ENCODE measurements at regions of chr7 and their contacts with region 1.

Region 1: DNA sequence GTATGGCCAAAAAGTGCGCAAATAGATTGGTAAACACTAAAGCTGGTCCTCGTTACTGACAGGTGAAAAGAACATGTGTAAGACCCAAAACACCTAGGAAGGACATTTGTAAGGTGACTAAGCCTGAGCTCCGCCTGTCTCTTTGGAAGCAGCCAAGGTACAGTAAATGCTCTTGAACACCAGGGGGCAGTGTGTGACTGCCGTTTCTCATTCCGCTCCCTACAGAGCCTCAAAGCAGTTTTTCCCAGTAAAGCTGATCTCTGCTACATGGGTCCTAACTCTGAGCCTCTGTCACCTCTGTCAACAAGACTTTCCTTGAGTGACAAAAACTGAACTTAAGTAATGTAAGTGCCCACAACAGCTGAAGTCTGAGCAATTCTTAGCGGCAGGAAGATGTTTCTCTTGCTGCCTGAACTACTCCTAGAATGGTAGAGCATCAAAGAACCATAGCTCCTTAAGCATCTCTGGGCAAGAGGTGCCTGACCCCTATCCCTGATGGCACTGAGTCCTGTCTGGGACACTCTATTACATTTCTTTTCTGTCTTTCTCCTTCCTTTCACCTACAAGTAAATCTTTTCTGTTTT is 238.0 kb upstream of the INHBA start:
- DNase-seq: peak; percentile 59 to 71
- ATAC-seq: peak; percentile 79 to 90
- H3K4me3 ChIP-seq: no peak overlapping the region
- H3K27ac ChIP-seq: no peak overlapping the region
- H3K4me1 ChIP-seq: 0 out of 3 replicates have a peak, but pooled peaks cover 5% of the 10 kb centered on the region
- CTCF ChIP-seq: peak; percentile 77
- EP300 ChIP-seq: no peak
- POLR2A ChIP-seq: no peak
- RAD21 ChIP-seq: peak; percentile 70 to 74

Region 2: GRCh38 chr7:41425926-41426325 is 514.9 kb before region 1 on chr7:
- CTCF ChIA-PET with region 1: no interaction called
- POLR2A ChIA-PET with region 1: no interaction called
- DNase-seq: no peak
- ATAC-seq: no peak; a peak in 1 of 6 replicates
- H3K4me3 ChIP-seq: no peak overlapping the region
- H3K27ac ChIP-seq: no peak overlapping the region
- H3K4me1 ChIP-seq: no peaks in the 10 kb centered on the region
- CTCF ChIP-seq: no peak
- EP300 ChIP-seq: no peak
- POLR2A ChIP-seq: no peak
- RAD21 ChIP-seq: no peak

Region 3: GRCh38 chr7:41612798-41613197 is 328.1 kb before region 1 on chr7:
- CTCF ChIA-PET with region 1: no interaction called
- POLR2A ChIA-PET with region 1: no interaction called
- DNase-seq: no peak
- ATAC-seq: no peak
- H3K4me3 ChIP-seq: no peak overlapping the region
- H3K27ac ChIP-seq: no peak overlapping the region
- H3K4me1 ChIP-seq: no peaks in the 10 kb centered on the region
- CTCF ChIP-seq: no peak
- EP300 ChIP-seq: no peak
- POLR2A ChIP-seq: no peak
- RAD21 ChIP-seq: no peak

Region 4: DNA sequence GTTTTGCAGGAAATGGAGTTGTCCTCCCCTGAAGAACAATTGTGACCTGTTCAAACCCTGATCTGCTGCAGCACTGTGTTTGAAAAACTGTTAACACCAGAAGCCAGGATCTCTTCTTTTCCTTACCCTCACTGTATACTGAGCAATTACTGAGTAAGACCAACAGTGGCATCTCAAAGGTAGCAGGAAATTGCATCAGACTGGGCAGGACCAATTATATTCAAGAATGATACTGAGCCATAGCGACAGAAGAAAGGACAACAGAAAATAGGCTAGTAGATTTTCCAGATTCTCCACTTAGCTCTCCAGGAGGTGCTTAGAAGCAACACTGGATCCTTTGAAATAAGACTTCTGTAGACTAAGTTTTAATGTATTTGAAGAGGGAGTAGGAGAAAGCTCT is 180.6 kb before region 1 on chr7:
- CTCF ChIA-PET with region 1: no interaction called
- POLR2A ChIA-PET with region 1: no interaction called
- DNase-seq: no peak
- ATAC-seq: no peak
- H3K4me3 ChIP-seq: no peak overlapping the region
- H3K27ac ChIP-seq: no peak overlapping the region
- H3K4me1 ChIP-seq: no peaks in the 10 kb centered on the region
- CTCF ChIP-seq: no peak
- EP300 ChIP-seq: no peak
- POLR2A ChIP-seq: no peak
- RAD21 ChIP-seq: no peak

Region 5: GRCh38 chr7:41918597-41918996 is 22.3 kb before region 1 on chr7:
- CTCF ChIA-PET with region 1: interaction called, 11 read pairs
- POLR2A ChIA-PET with region 1: no interaction called
- DNase-seq: no peak
- ATAC-seq: no peak
- H3K4me3 ChIP-seq: no peak overlapping the region
- H3K27ac ChIP-seq: no peak overlapping the region
- H3K4me1 ChIP-seq: peaks cover 17% of the 10 kb centered on the region; the same call in 2 of the 3 replicates
- CTCF ChIP-seq: no peak
- EP300 ChIP-seq: no peak
- POLR2A ChIP-seq: no peak
- RAD21 ChIP-seq: no peak

Region 6: GRCh38 chr7:41955893-41956675 is 15.2 kb after region 1 on chr7:
- CTCF ChIA-PET with region 1: interaction called, 16 read pairs
- POLR2A ChIA-PET with region 1: no interaction called
- DNase-seq: peak; percentile 35 to 57
- ATAC-seq: peak; percentile 84 to 93
- H3K4me3 ChIP-seq: no peak overlapping the region
- H3K27ac ChIP-seq: no peak overlapping the region
- H3K4me1 ChIP-seq: peaks cover 10% of the 10 kb centered on the region; the same call in 2 of the 3 replicates
- CTCF ChIP-seq: no peak
- EP300 ChIP-seq: no peak
- POLR2A ChIP-seq: no peak
- RAD21 ChIP-seq: no peak

Region 7: DNA sequence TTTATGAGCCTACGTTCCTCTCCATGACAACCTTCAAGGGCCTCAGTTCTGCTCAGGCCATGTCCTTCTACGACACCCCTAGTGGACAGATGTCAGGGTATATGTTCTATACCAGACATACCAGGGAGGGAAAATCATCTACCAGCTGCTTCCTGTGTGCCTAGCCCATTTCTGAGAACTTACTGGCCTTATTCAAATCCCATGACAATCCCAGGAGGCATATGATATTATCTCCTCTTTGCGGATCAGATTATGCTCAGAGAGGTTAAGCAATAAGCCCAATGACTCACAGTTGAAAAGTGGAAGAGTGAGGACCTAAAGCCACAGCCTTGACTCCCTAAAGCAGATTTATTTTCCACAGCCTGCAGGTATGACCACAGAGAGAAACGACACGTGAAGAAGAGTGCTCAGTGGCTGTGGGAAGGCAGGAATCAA is 156.9 kb after region 1 on chr7:
- CTCF ChIA-PET with region 1: no interaction called
- POLR2A ChIA-PET with region 1: no interaction called
- DNase-seq: peak in 1 of 2 experiments; percentile 11
- ATAC-seq: peak; percentile 75 to 78; a peak in 4 of 6 replicates
- H3K4me3 ChIP-seq: no peak overlapping the region
- H3K27ac ChIP-seq: no peak overlapping the region
- H3K4me1 ChIP-seq: no peaks in the 10 kb centered on the region
- CTCF ChIP-seq: no peak
- EP300 ChIP-seq: no peak
- POLR2A ChIP-seq: no peak
- RAD21 ChIP-seq: no peak

Region 8: GRCh38 chr7:42690794-42691639 is 750.2 kb after region 1 on chr7:
- CTCF ChIA-PET with region 1: interaction called, 11 read pairs
- POLR2A ChIA-PET with region 1: no interaction called
- DNase-seq: peak; percentile 6 to 34
- ATAC-seq: peak; percentile 82 to 87
- H3K4me3 ChIP-seq: no peak overlapping the region
- H3K27ac ChIP-seq: no peak overlapping the region
- H3K4me1 ChIP-seq: no peaks in the 10 kb centered on the region
- CTCF ChIP-seq: peak; percentile 32; the same call in 2 of the 3 replicates
- EP300 ChIP-seq: no peak
- POLR2A ChIP-seq: no peak
- RAD21 ChIP-seq: peak; percentile 43 to 66

Region 9: GRCh38 chr7:42843205-42843800 is 902.5 kb after region 1 on chr7:
- CTCF ChIA-PET with region 1: interaction called, 28 read pairs
- POLR2A ChIA-PET with region 1: no interaction called
- DNase-seq: peak; percentile 36 to 51
- ATAC-seq: peak; percentile 91 to 97
- H3K4me3 ChIP-seq: no peak overlapping the region
- H3K27ac ChIP-seq: no peak overlapping the region
- H3K4me1 ChIP-seq: no peaks in the 10 kb centered on the region
- CTCF ChIP-seq: peak; percentile 52
- EP300 ChIP-seq: no peak
- POLR2A ChIP-seq: no peak
- RAD21 ChIP-seq: peak; percentile 72 to 73

Measured in A549 (cell line).